Right ventricle myocardium inferior (tissue), 1 donor: ENCODE measurements at regions of chr4 and their contacts with region 1.

Region 1: DNA sequence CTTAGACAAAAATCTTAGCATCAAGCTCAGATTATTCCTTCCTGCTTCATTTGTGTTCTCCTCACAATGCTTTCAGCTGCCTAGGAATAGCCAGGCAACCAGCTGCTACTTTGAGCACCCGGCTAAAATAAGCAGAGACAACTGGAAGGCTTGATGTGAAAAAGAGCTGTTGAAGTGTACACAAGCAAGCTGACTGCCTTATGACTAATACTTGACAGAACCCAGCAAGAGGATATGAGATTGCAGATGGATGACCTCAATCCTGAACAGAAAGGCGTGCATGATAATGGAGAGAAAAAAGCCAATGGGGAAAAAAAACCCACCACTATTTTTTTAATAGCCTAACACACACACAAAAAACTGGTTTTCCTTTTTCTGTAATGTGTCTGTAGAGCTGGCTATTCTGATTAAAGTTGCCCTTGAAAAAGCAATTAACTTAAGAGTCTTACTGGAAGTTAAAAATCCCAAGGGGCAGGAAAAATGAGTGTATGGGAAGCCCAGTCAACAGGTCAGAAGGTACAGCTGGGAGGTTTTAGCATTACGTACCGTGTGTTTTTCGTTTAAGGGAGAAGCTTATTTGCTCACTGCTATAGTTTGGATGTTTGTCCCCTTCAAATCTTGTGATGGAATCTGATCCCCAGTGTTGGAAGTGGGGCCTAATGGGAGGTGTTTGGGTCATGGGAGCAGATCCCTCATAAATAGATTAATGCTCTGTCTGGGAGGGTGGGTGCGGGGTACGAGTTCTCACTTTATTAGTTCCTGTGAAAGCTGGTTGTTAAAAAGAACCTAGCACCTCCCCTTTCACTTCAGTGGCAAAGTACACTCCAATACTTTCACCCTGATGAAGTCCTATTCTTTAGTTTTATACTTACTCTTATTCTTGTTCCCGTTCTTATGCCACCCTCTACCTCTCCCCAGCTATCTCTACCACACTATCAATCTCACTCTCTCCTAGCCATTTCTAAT is 37.1 kb upstream of the HERC6 start:
- DNase-seq: no peak
- ATAC-seq: peak; percentile 97

Region 2: GRCh38 chr4:88295656-88296055 is 45.9 kb before region 1 on chr4:
- intact Hi-C with region 1: loop called (anchors 2 kb)
- DNase-seq: no peak
- ATAC-seq: peak; percentile 47

Region 3: GRCh38 chr4:88481537-88481936 is 140.0 kb after region 1 on chr4:
- intact Hi-C with region 1: no loop called
- DNase-seq: no peak
- ATAC-seq: no peak